Activated CD8-positive, alpha-beta T cell treated with anti-CD3 and anti-CD28 coated beads for 36 hours (primary cell): ENCODE measurements at regions of chr20 and their contacts with region 1.

Region 1: DNA sequence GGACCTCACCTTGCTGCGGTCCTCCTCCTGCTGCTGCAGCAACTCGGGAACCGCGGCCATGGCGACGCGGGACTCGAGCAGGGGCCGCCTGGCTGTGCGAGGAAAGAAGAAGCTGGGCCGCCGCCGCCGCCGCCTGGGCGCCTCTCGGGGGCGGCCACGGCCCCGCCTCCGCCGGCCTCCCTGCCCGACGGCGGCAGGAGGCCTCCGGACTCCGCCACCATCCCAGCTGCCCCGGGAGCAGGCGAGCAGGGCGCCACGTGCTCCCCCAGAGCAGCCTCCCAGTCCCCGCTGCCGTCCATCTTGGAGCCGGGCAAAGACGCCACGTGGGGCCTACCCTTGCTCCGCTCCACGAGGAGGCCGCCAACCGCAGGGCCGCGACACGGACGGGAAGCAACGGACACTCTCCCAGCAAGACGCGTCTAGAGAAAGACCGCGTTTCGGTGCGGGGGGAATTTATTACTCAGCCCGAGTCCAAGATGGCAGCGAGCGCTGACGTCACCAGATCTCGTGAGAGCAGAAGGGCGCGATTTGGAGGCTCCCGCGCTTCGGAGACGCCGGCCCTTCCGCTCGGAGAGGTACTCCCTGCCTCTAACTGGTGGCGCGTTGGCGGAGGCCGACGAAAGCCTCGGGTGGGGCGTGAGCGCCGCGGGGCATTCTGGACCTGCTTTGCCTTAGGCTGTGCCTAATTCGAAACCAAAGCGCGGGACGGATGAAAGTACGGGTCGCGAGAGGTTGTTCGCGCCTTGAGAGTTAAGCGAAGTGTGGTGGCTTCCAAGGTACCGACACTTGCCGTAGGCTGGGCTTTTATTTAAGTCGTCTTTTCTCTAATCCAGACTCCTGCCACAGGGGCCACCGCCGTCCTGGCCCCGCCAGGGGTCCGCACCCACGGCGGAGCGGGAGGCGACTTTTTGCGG is at the starts of genes MGME1 and SNX5:
- DNase-seq: peak; percentile 100
- ATAC-seq: peak; percentile 92
- H3K4me3 Mint-ChIP-seq: peak within 1 kb of the TSS; percentile 92
- H3K27ac Mint-ChIP-seq: peak within 1 kb of the TSS; percentile 99
- H3K4me1 Mint-ChIP-seq: peaks cover 37% of the 10 kb centered on the region
- H3K27me3 Mint-ChIP-seq: no peaks in the 10 kb centered on the region
- CTCF ChIP-seq: no peak
- total RNA-seq, gene MGME1: 28.2 to 30.5 TPM
- total RNA-seq, gene SNX5: 222 to 249 TPM

Region 2: DNA sequence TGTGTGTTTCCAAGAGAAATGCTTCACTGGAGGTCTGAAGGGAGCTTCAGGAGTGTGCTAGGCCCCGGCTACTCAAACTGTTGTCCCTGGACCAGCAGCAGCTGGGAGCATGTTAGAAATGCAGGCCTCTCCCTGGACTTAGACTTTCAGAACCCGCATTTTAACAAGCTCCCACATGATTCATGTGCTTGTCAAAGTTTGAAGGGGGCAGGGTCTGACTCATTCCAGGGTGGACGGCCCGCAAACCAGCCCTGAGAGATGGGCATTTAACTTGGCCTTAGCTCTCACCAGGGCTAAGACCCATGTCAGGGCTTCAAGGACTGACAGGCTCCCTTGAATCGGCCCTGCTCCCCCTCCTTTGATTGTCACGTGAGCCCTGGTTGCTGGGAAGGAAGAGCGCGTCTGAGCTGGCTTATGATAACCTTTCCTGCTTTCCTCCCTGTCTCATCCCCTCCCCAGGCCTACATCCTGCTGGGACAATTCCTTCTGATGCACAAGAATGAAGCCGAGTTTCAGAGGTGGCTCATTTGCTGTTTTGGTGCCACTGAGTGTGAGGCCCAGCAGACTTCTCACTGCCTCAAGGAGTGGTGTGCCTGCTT is 233.3 kb before region 1 on chr20:
- CTCF ChIA-PET with region 1: no interaction called
- POLR2A ChIA-PET with region 1: no interaction called
- intact Hi-C with region 1: no loop called
- DNase-seq: no peak
- ATAC-seq: no peak
- H3K4me3 Mint-ChIP-seq: no peak overlapping the region
- H3K27ac Mint-ChIP-seq: no peak overlapping the region
- H3K4me1 Mint-ChIP-seq: no peaks in the 10 kb centered on the region
- H3K27me3 Mint-ChIP-seq: peaks cover 2% of the 10 kb centered on the region
- CTCF ChIP-seq: no peak

Region 3: DNA sequence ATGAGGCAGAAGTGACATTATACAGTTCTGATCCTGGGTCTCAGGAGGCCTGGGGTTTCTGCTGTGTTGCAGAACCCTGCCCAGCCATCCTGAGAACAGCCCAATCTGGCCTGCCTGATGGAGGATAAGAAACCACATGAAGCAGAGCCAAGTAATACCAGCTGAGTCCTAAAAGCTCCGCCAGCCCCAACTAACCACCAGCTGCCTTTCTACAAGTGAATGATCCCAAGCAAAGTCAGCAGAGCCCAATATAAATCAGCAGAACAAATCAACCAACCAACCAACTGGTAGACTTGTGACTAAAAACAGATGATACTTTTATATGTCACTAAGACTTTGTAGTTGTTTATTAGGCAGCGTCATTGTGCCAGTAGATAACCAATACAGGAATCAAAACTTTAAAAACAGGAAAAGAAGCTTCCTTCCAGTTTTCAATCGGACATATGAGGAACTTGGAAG is 52.2 kb before region 1 on chr20:
- CTCF ChIA-PET with region 1: no interaction called
- POLR2A ChIA-PET with region 1: no interaction called
- intact Hi-C with region 1: no loop called
- DNase-seq: no peak
- ATAC-seq: no peak
- H3K4me3 Mint-ChIP-seq: no peak overlapping the region
- H3K27ac Mint-ChIP-seq: no peak overlapping the region
- H3K4me1 Mint-ChIP-seq: no peaks in the 10 kb centered on the region
- H3K27me3 Mint-ChIP-seq: peaks cover 14% of the 10 kb centered on the region
- CTCF ChIP-seq: no peak

Region 4: GRCh38 chr20:17938871-17939619 is 29.6 kb before region 1 on chr20:
- CTCF ChIA-PET with region 1: interaction called, 10 read pairs
- POLR2A ChIA-PET with region 1: interaction called, 3 read pairs
- intact Hi-C with region 1: no loop called
- DNase-seq: peak; percentile 80
- ATAC-seq: peak; percentile 95
- H3K4me3 Mint-ChIP-seq: no peak overlapping the region
- H3K27ac Mint-ChIP-seq: peak overlapping the region; percentile 44
- H3K4me1 Mint-ChIP-seq: peaks cover 30% of the 10 kb centered on the region
- H3K27me3 Mint-ChIP-seq: no peaks in the 10 kb centered on the region
- CTCF ChIP-seq: peak; percentile 85

Region 5: DNA sequence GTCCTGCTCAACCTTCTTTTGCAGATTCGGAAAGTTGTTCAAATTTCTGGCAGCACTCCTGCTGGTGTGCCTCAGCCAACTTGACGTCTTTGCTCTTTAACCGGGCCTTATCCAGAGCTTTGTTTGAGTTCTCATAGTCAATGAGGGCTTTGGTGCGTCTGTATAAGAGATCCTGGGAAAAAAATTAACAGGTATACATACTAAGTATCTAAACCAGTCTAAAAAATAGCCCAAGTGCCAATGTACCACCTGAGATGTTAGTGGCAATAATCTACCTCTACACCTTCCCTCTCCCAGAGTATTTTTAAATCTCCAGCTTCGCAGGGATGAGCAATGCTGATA is 21.2 kb before region 1 on chr20:
- CTCF ChIA-PET with region 1: interaction called, 3 read pairs
- POLR2A ChIA-PET with region 1: interaction called, 10 read pairs
- intact Hi-C with region 1: no loop called
- DNase-seq: no peak
- ATAC-seq: no peak
- H3K4me3 Mint-ChIP-seq: no peak overlapping the region
- H3K27ac Mint-ChIP-seq: no peak overlapping the region
- H3K4me1 Mint-ChIP-seq: peaks cover 5% of the 10 kb centered on the region
- H3K27me3 Mint-ChIP-seq: no peaks in the 10 kb centered on the region
- CTCF ChIP-seq: no peak

Region 6: DNA sequence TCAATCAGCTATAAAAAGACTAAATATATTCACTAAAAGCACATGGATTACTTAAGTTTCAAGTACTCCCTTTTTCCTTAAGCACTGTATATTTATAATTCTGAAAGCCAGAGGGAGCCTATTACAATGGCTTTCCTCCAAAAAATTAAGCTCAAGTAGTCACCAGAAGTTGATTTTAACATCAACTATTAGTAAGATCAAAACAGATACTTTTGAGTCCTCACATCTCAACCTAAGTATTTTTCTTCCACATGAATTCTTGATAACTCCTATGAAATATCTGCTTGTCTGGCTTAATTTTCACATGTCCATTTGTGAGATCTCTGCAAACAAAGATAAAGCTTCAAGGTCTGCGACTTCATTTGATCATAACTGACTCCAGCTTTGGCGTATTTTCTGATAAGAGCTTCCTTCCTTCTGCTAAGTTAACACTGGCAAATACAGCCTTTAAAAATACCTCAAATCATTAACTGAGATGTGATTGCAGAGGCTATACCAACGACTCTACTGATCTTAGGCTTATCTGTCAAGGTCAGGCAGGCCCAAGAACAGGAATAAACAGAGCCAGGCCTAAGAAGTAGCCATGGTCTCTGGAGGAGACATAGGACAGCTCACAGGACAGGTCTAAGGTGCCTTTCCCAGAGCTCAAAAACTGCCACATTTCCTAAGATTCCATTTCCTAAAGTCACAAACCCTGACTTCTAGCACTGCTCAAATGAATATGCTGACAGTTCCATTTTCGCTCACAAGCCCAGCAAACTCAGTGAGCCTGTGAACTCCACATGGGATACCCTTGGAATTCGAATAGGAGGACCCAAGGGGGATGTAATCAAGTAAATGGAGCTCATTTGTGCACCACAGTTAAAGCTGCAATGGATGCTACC is 10.0 kb before region 1 on chr20:
- CTCF ChIA-PET with region 1: interaction called, 11 read pairs
- POLR2A ChIA-PET with region 1: interaction called, 36 read pairs
- intact Hi-C with region 1: no loop called
- DNase-seq: no peak
- ATAC-seq: no peak
- H3K4me3 Mint-ChIP-seq: no peak overlapping the region
- H3K27ac Mint-ChIP-seq: peak overlapping the region; percentile 56
- H3K4me1 Mint-ChIP-seq: peaks cover 73% of the 10 kb centered on the region
- H3K27me3 Mint-ChIP-seq: no peaks in the 10 kb centered on the region
- CTCF ChIP-seq: no peak

Region 7: GRCh38 chr20:17990278-17990972 is 21.8 kb after region 1 on chr20:
- CTCF ChIA-PET with region 1: interaction called, 8 read pairs
- POLR2A ChIA-PET with region 1: interaction called, 10 read pairs
- intact Hi-C with region 1: loop called (anchors 2 kb)
- DNase-seq: no peak
- ATAC-seq: no peak
- H3K4me3 Mint-ChIP-seq: no peak overlapping the region
- H3K27ac Mint-ChIP-seq: no peak overlapping the region
- H3K4me1 Mint-ChIP-seq: peaks cover 32% of the 10 kb centered on the region
- H3K27me3 Mint-ChIP-seq: peaks cover 5% of the 10 kb centered on the region
- CTCF ChIP-seq: no peak

Region 8: GRCh38 chr20:17995967-17996819 is 27.6 kb after region 1 on chr20:
- CTCF ChIA-PET with region 1: interaction called, 8 read pairs
- POLR2A ChIA-PET with region 1: interaction called, 10 read pairs
- intact Hi-C with region 1: loop called (anchors 2 kb)
- DNase-seq: peak; percentile 54
- ATAC-seq: peak; percentile 72
- H3K4me3 Mint-ChIP-seq: no peak overlapping the region
- H3K27ac Mint-ChIP-seq: no peak overlapping the region
- H3K4me1 Mint-ChIP-seq: peaks cover 27% of the 10 kb centered on the region
- H3K27me3 Mint-ChIP-seq: peaks cover 22% of the 10 kb centered on the region
- CTCF ChIP-seq: peak; percentile 94

Region 9: DNA sequence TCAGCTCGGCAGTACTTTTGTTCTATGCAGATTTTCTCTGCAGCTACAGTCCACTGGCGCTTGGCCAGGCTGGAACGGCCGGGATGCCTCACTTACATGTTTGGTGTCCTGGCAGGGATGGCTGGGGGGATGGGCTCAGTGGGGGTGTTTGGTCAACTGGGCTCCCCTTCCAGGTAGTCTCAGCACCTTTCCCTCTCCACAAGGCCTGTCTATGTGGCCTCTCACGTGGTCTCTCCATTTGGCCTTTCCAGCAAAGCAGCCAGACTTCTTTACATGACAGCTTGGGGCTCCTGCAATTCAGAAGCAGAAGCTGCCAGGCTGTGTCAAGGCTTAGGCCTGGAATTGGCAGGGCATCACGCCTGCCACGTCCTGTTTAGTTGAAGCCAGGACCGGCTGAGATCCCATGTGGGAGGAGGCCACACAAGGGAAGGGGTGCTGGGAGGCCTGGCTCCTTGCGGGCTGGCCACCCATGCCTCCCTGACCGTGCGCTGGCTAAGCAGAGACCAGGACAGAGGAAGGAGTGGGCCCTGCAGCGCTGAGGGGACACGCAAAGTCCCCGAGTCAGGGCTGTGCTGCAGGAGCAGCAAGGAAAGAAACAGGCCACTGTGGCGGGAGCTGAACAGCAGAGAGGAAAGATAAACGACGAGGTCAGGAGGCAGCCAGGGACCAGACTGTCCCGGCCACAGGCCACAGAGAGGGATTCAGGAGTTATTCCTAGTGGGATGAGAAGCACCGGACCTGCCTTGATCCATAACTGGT is 39.1 kb after region 1 on chr20:
- CTCF ChIA-PET with region 1: no interaction called
- POLR2A ChIA-PET with region 1: no interaction called
- intact Hi-C with region 1: no loop called
- DNase-seq: no peak
- ATAC-seq: no peak
- H3K4me3 Mint-ChIP-seq: no peak overlapping the region
- H3K27ac Mint-ChIP-seq: no peak overlapping the region
- H3K4me1 Mint-ChIP-seq: no peaks in the 10 kb centered on the region
- H3K27me3 Mint-ChIP-seq: no peaks in the 10 kb centered on the region
- CTCF ChIP-seq: no peak